Activated CD4-positive, alpha-beta T cell treated with anti-CD3 and anti-CD28 coated beads, Interleukin-2, amount 10 ng/mL, durations not matched to agents 24 days and 14 days (primary cell): ENCODE measurements at regions of chr7 and their contacts with region 1.

Region 1: DNA sequence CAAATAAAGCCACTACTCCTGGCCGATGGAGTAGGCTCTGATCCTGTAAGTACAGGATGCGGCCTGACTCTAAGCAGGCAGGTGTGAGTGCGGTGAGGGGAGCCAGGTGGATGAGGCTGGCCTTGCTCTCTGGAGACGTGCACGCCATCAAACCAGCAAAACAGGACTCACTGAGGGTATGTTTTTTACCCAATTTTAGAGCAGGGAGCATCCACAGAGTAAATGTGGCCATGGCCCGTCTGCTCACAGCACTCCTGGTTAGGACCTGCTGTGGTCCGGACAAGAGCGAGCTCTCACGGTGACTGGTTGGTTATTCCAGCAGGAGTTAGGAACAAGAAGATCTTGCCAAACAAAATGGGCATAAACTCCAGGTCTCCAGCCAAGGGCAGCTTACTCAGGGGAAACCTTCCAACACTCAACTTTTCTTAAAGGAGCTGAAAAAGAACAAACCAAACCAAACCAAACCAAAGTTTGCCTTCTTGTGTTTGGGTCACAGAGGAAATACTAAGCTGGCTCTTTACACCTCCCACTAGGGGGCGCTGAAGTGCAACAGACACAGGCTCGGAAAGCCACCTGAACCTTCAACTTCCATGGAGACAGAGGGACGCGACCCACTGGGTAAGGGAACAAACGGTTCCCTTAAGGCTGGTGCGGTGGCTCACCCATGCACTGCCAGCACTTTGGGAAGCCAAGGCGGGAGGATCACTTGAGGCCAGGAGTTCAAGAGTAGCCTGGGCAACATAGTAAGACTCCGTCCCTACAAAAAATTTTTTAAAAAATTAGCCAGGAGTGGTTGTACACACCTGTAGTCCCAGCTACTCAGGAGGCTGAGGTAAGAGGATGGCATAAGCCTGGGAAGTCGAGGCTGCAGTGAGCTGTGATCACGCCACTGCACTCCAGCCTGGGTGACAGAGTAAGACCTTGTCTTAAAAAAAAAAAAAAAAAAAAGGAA is 122.4 kb downstream of the CLEC2L start:
- DNase-seq: peak; percentile 94
- H3K4me3 Mint-ChIP-seq: no peak overlapping the region
- H3K27ac Mint-ChIP-seq: no peak overlapping the region
- H3K4me1 Mint-ChIP-seq: peaks cover 51% of the 10 kb centered on the region
- H3K27me3 Mint-ChIP-seq: no peaks in the 10 kb centered on the region

Region 2: GRCh38 chr7:139702811-139703486 is 57.1 kb after region 1 on chr7:
- intact Hi-C with region 1: no loop called
- DNase-seq: no peak
- H3K4me3 Mint-ChIP-seq: no peak overlapping the region
- H3K27ac Mint-ChIP-seq: no peak overlapping the region
- H3K4me1 Mint-ChIP-seq: peaks cover 27% of the 10 kb centered on the region
- H3K27me3 Mint-ChIP-seq: no peaks in the 10 kb centered on the region

Region 3: GRCh38 chr7:139722604-139723003 is 76.8 kb after region 1 on chr7:
- intact Hi-C with region 1: loop called (anchors 2 kb)
- DNase-seq: no peak
- H3K4me3 Mint-ChIP-seq: no peak overlapping the region
- H3K27ac Mint-ChIP-seq: no peak overlapping the region
- H3K4me1 Mint-ChIP-seq: peaks cover 17% of the 10 kb centered on the region
- H3K27me3 Mint-ChIP-seq: no peaks in the 10 kb centered on the region

Region 4: DNA sequence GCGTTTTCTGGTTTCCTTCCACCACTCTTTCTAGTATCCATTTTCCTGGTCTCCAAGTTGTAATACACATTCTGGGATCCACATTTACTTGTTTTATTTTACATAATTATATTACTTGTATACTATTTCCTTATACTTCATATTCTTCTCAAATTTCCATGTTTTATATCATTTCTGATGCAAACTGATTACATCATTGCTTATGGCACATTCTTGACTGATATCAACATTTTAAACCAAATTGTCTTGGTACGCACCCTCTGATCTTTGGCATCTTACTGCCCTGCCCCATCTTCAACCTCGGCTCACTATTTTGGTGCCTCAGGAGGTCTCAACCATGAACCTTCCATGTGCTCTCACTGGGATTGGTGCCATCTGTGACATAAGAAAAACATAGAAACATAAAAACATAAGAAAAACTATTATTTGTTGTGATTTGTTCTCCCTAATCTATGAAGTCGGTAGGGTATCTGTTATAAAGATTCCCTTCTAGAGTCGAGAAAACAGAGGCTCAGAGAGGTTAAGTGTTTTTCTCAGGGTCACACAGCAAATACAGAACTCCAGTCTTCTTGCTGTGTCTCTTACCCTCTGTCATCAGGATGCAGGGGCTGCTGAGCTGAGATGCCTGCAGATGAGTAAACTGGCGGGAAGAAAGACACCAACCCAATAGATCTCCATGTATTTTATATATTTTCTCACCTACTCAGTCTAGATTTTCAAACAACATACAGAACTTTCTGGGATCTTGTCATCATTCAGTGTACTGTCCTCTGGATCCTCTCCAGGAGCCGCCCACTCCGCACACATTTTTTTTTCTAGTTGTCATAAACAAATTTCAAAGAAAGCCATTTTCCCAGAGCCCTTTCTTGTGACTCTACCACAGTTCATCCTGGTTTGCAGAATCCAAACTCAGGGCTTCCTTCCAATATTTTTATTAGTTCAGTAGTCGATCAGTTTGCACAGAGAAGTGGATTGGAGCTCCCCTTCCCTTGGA is 337.4 kb after region 1 on chr7:
- intact Hi-C with region 1: loop called (anchors 5 kb)
- DNase-seq: no peak
- H3K4me3 Mint-ChIP-seq: no peak overlapping the region
- H3K27ac Mint-ChIP-seq: no peak overlapping the region
- H3K4me1 Mint-ChIP-seq: peaks cover 12% of the 10 kb centered on the region
- H3K27me3 Mint-ChIP-seq: peaks cover 19% of the 10 kb centered on the region